Prostate gland (tissue), 2 donors: ENCODE measurements at regions of chr4 and their contacts with region 1.

Region 1: DNA sequence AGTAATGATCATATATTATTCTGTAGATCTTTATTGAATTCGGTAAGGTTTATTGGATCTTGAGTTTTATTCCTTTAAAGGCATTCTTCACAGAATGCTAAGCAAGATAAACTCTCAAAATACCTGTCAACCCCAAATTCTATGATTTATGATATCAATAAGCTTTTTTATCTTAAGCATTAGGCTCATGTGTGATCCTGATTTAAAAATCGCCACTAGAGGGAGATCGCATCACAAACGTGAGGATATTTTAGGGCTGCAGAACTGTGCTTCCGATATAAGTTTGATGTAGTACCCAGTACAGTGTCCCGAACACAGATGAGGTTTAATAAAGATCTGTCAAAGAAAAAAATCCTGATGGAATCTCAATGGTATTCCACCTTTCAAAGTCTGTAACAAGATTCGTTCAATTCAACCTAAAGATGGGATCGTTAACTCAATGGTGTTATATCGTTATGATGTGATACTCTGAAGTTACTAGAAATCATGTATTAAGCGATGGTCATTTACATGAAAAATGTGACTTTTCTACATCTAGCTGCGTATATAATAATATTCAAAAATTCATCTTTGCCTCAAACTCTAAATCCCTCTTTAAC is 169.0 kb downstream of the CORIN start:
- DNase-seq: peak; percentile 38
- H3K4me3 ChIP-seq: no peak overlapping the region
- H3K27ac ChIP-seq: no peak overlapping the region
- H3K4me1 ChIP-seq: no peaks in the 10 kb centered on the region
- H3K27me3 ChIP-seq: no peaks in the 10 kb centered on the region
- CTCF ChIP-seq: peak; percentile 53 to 74 (median 68)
- POLR2A ChIP-seq: no peak

Region 2: DNA sequence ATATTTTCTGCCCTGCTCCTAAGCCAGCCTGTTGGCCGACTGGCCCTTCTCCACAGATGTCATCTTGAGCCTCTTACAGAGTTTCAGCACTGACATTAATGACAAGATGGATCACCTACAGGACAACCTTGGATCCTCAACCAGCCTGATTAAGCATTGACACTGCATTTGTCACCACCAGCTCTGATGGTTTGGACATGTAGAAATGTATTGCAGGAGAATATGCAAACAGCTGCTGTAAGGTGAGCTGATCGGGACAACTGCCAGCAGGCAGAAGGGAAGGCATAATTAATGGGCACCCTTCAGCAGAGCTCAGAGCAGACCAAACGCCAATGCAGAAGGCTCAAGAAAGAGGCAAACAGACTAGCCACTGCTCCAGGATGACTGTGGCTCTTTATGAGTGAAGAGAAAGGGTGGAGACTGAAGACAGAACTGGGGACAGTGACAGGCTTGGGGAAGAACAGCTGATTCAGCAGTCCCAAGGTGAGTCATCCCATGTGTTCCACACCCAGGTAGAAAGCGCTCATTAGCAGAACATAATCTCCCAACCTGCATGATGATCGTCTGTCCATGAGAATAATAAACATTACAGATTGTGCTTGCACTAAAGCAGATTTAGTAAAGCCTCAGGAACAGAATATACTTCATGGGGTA is 162.2 kb after region 1 on chr4:
- intact Hi-C with region 1: no loop called
- DNase-seq: no peak
- H3K4me3 ChIP-seq: no peak overlapping the region
- H3K27ac ChIP-seq: no peak overlapping the region
- H3K4me1 ChIP-seq: no peaks in the 10 kb centered on the region
- H3K27me3 ChIP-seq: no peaks in the 10 kb centered on the region
- CTCF ChIP-seq: no peak
- POLR2A ChIP-seq: no peak

Region 3: DNA sequence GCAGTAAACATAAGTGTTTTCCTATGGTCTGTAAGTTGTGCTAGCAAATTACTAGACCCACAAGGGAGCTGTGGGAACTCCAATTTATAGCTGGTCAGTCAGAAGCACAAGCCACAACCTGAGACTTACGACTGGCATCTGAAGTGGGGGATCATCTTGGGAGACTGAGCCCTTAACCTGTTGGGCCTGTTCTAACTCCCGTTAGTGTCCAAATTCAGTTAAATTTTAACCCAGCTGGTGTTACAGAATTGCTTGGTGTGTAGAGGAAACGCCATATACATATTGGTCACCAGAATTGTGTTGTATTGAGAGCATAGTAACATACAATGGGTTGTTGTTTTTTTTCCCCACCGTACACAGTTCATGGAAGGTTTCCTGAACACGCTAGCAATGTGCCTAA is 270.5 kb after region 1 on chr4:
- intact Hi-C with region 1: loop called (anchors 5 kb)
- DNase-seq: no peak
- H3K4me3 ChIP-seq: no peak overlapping the region
- H3K27ac ChIP-seq: no peak overlapping the region
- H3K4me1 ChIP-seq: no peaks in the 10 kb centered on the region
- H3K27me3 ChIP-seq: no peaks in the 10 kb centered on the region
- CTCF ChIP-seq: no peak
- POLR2A ChIP-seq: no peak